HepG2 (cell line): ENCODE measurements at regions of chr4 and their contacts with region 1.

Region 1: GRCh38 chr4:88533937-88534750 is 10.6 kb upstream of the PYURF start:
- DNase-seq: no peak
- ATAC-seq: no peak
- H3K4me3 ChIP-seq: no peak overlapping the region
- H3K27ac ChIP-seq: no peak overlapping the region
- H3K4me1 ChIP-seq: peaks cover 4% of the 10 kb centered on the region; the same call in 1 of the 2 replicates
- H3K27me3 ChIP-seq: no peaks in the 10 kb centered on the region
- CTCF ChIP-seq: no peak
- EP300 ChIP-seq: no peak
- POLR2A ChIP-seq: no peak
- RAD21 ChIP-seq: no peak

Region 2: GRCh38 chr4:88659055-88659889 is 125.1 kb after region 1 on chr4:
- CTCF ChIA-PET with region 1: interaction called, 14 read pairs
- POLR2A ChIA-PET with region 1: no interaction called
- in situ Hi-C with region 1: loop called (anchors 5 kb)
- intact Hi-C with region 1: loop called (anchors 1 kb)
- DNase-seq: peak; percentile 52
- ATAC-seq: peak; percentile 99
- H3K4me3 ChIP-seq: no peak overlapping the region; a peak in 1 of 6 replicates
- H3K27ac ChIP-seq: peak overlapping the region; percentile 16
- H3K4me1 ChIP-seq: peaks cover 37% of the 10 kb centered on the region
- H3K27me3 ChIP-seq: no peaks in the 10 kb centered on the region
- CTCF ChIP-seq: peak; percentile 78
- EP300 ChIP-seq: no peak
- POLR2A ChIP-seq: no peak
- RAD21 ChIP-seq: peak; percentile 39; the same call in 1 of the 2 replicates

Region 3: GRCh38 chr4:88928852-88929251 is 394.7 kb after region 1 on chr4:
- CTCF ChIA-PET with region 1: no interaction called
- POLR2A ChIA-PET with region 1: no interaction called
- in situ Hi-C with region 1: no loop called
- intact Hi-C with region 1: no loop called
- DNase-seq: no peak
- ATAC-seq: no peak
- H3K4me3 ChIP-seq: no peak overlapping the region
- H3K27ac ChIP-seq: no peak overlapping the region
- H3K4me1 ChIP-seq: no peaks in the 10 kb centered on the region
- H3K27me3 ChIP-seq: no peaks in the 10 kb centered on the region
- CTCF ChIP-seq: no peak
- EP300 ChIP-seq: no peak
- POLR2A ChIP-seq: no peak
- RAD21 ChIP-seq: no peak